CD8-positive, alpha-beta T cell (primary cell): ENCODE measurements at regions of chr1 and their contacts with region 1.

Region 1: DNA sequence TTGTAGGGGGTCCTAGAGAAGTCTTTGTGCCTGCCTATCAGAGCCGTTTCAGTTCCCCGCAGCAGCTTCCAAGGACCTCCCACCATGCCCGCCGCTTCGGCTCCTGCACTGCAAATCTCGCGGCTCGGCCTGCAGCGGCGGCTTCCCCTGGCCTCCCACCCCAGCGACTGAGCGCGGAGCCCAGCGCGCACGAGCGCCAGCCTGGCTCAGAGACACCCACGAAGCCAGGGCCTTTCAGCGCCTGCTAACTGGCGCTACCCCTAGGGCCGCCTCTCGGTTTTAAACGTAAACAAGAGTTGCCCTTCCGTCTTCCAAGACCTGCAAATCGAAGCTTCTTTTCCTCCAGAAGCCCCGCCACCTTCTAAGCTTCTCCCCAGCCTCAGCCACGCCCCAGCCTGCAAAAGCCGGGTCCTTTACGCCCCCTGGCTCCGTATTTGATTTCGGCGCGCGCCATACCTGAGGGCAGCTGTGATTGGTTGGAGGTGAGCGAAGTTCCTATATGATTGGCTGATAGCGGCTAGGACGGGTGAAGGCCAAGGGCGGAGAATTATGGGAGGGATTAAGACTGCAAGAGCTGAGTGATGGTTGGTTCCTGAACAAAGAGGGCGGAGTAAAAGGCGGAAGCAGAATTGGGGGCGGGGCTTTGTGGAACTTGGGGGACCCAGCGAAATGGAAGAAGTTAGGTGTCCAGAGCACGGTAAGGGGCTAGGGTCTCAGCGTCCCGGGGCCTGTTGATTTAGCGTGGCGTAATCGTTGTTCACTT is at the start of gene TTF2:
- DNase-seq: peak; percentile 88 to 99 (median 93)
- ATAC-seq: peak; percentile 87
- H3K4me3 ChIP-seq: peak within 1 kb of the TSS; percentile 75
- H3K4me3 Mint-ChIP-seq: no peak within 1 kb of the TSS
- H3K27ac ChIP-seq: peak within 1 kb of the TSS; percentile 70 to 92
- H3K27ac Mint-ChIP-seq: no peak within 1 kb of the TSS
- H3K4me1 ChIP-seq: peaks cover 22% of the 10 kb centered on the region
- H3K4me1 Mint-ChIP-seq: peaks cover 39% of the 10 kb centered on the region
- H3K27me3 ChIP-seq: no peaks in the 10 kb centered on the region
- H3K27me3 Mint-ChIP-seq: no peaks in the 10 kb centered on the region
- CTCF ChIP-seq: no peak
- total RNA-seq, gene TTF2: 31.5 to 33.2 TPM

Region 2: GRCh38 chr1:116504308-116505156 is 555.3 kb before region 1 on chr1:
- CTCF ChIA-PET with region 1: no interaction called
- POLR2A ChIA-PET with region 1: no interaction called
- intact Hi-C with region 1: loop called in 1 of 2 experiments (anchors 10 kb)
- DNase-seq: peak; percentile 71 to 97 (median 88)
- ATAC-seq: peak; percentile 93
- H3K4me3 ChIP-seq: no peak overlapping the region
- H3K4me3 Mint-ChIP-seq: peak overlapping the region; percentile 19
- H3K27ac ChIP-seq: peak overlapping the region; percentile 22 to 92
- H3K27ac Mint-ChIP-seq: peak overlapping the region; percentile 91
- H3K4me1 ChIP-seq: peaks cover 26% of the 10 kb centered on the region
- H3K4me1 Mint-ChIP-seq: peaks cover 42% of the 10 kb centered on the region
- H3K27me3 ChIP-seq: no peaks in the 10 kb centered on the region
- H3K27me3 Mint-ChIP-seq: no peaks in the 10 kb centered on the region
- CTCF ChIP-seq: no peak

Region 3: DNA sequence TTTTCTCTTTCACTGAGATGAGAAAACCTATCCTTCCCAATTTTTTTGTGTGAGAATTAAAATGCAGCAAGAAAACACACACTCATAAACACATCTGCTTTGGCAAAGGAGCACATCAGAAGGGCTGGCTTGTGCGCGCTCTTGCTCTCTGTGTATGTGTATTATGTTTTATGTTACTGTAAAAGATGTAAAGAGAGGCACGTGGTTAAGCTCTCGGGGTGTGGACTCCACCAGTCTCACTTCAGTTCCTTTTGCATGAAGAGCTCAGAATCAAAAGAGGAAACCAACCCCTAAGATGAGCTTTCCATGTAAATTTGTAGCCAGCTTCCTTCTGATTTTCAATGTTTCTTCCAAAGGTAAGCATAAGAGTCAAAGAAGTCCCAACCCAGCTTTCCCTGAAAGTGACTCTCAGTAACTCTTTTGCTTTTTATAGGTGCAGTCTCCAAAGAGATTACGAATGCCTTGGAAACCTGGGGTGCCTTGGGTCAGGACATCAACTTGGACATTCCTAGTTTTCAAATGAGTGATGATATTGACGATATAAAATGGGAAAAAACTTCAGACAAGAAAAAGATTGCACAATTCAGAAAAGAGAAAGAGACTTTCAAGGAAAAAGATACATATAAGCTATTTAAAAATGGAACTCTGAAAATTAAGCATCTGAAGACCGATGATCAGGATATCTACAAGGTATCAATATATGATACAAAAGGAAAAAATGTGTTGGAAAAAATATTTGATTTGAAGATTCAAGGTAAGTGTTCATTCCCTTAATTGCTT is 305.5 kb before region 1 on chr1 and contains the start of gene CD2:
- CTCF ChIA-PET with region 1: no interaction called
- POLR2A ChIA-PET with region 1: interaction called, 15 read pairs
- intact Hi-C with region 1: loop called in 1 of 2 experiments (anchors 1 kb)
- DNase-seq: peak in 6 of 9 experiments; percentile 43 to 80 (median 60)
- ATAC-seq: peak; percentile 83
- H3K4me3 ChIP-seq: peak within 1 kb of the TSS; percentile 71 to 84
- H3K4me3 Mint-ChIP-seq: peak within 1 kb of the TSS; percentile 93
- H3K27ac ChIP-seq: peak within 1 kb of the TSS; percentile 70 to 87
- H3K27ac Mint-ChIP-seq: peak within 1 kb of the TSS; percentile 99
- H3K4me1 ChIP-seq: peaks cover 23% of the 10 kb centered on the region
- H3K4me1 Mint-ChIP-seq: peaks cover 40% of the 10 kb centered on the region
- H3K27me3 ChIP-seq: no peaks in the 10 kb centered on the region
- H3K27me3 Mint-ChIP-seq: no peaks in the 10 kb centered on the region
- CTCF ChIP-seq: no peak
- total RNA-seq, gene CD2: 97.8 to 102 TPM

Region 4: GRCh38 chr1:116853670-116854402 is 206.0 kb before region 1 on chr1:
- CTCF ChIA-PET with region 1: interaction called, 14 read pairs
- POLR2A ChIA-PET with region 1: no interaction called
- intact Hi-C with region 1: loop called (anchors 1 kb)
- DNase-seq: no peak
- ATAC-seq: no peak
- H3K4me3 ChIP-seq: no peak overlapping the region
- H3K4me3 Mint-ChIP-seq: no peak overlapping the region
- H3K27ac ChIP-seq: no peak overlapping the region
- H3K27ac Mint-ChIP-seq: no peak overlapping the region
- H3K4me1 ChIP-seq: no peaks in the 10 kb centered on the region
- H3K4me1 Mint-ChIP-seq: peaks cover 8% of the 10 kb centered on the region
- H3K27me3 ChIP-seq: no peaks in the 10 kb centered on the region
- H3K27me3 Mint-ChIP-seq: no peaks in the 10 kb centered on the region
- CTCF ChIP-seq: no peak

Region 5: GRCh38 chr1:116951200-116951935 is 108.5 kb before region 1 on chr1:
- CTCF ChIA-PET with region 1: no interaction called
- POLR2A ChIA-PET with region 1: no interaction called
- intact Hi-C with region 1: no loop called
- DNase-seq: no peak
- ATAC-seq: no peak
- H3K4me3 ChIP-seq: no peak overlapping the region
- H3K4me3 Mint-ChIP-seq: no peak overlapping the region
- H3K27ac ChIP-seq: no peak overlapping the region
- H3K27ac Mint-ChIP-seq: no peak overlapping the region
- H3K4me1 ChIP-seq: no peaks in the 10 kb centered on the region
- H3K4me1 Mint-ChIP-seq: no peaks in the 10 kb centered on the region
- H3K27me3 ChIP-seq: no peaks in the 10 kb centered on the region
- H3K27me3 Mint-ChIP-seq: no peaks in the 10 kb centered on the region
- CTCF ChIP-seq: no peak

Region 6: GRCh38 chr1:117036018-117036461 is 23.8 kb before region 1 on chr1:
- CTCF ChIA-PET with region 1: no interaction called
- POLR2A ChIA-PET with region 1: no interaction called
- intact Hi-C with region 1: no loop called
- DNase-seq: no peak
- ATAC-seq: no peak
- H3K4me3 ChIP-seq: no peak overlapping the region
- H3K4me3 Mint-ChIP-seq: no peak overlapping the region
- H3K27ac ChIP-seq: no peak overlapping the region
- H3K27ac Mint-ChIP-seq: no peak overlapping the region
- H3K4me1 ChIP-seq: no peaks in the 10 kb centered on the region
- H3K4me1 Mint-ChIP-seq: peaks cover 12% of the 10 kb centered on the region
- H3K27me3 ChIP-seq: no peaks in the 10 kb centered on the region
- H3K27me3 Mint-ChIP-seq: no peaks in the 10 kb centered on the region
- CTCF ChIP-seq: no peak

Region 7: DNA sequence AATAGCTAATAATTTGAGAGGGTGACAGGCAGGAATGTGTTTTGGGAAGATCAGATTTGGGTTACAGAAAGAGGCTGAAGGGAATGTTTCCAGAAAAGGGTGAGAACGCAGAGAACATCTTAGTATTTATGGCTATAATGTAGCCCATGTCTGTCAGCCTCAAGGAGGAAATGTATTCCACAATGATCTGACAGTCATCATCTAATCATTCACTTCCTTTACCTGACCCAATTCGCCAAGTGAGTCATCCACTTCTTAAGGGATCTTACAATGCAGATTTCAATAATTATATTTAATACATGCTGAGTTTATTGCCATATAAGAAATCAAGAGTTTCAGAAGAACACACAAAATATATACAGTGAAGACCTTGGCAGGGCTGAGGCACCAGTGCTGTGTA is 50.9 kb after region 1 on chr1:
- CTCF ChIA-PET with region 1: no interaction called
- POLR2A ChIA-PET with region 1: no interaction called
- intact Hi-C with region 1: no loop called
- DNase-seq: no peak
- ATAC-seq: no peak
- H3K4me3 ChIP-seq: no peak overlapping the region
- H3K4me3 Mint-ChIP-seq: no peak overlapping the region
- H3K27ac ChIP-seq: no peak overlapping the region
- H3K27ac Mint-ChIP-seq: no peak overlapping the region
- H3K4me1 ChIP-seq: no peaks in the 10 kb centered on the region
- H3K4me1 Mint-ChIP-seq: no peaks in the 10 kb centered on the region
- H3K27me3 ChIP-seq: no peaks in the 10 kb centered on the region
- H3K27me3 Mint-ChIP-seq: peaks cover 2% of the 10 kb centered on the region
- CTCF ChIP-seq: no peak

Region 8: DNA sequence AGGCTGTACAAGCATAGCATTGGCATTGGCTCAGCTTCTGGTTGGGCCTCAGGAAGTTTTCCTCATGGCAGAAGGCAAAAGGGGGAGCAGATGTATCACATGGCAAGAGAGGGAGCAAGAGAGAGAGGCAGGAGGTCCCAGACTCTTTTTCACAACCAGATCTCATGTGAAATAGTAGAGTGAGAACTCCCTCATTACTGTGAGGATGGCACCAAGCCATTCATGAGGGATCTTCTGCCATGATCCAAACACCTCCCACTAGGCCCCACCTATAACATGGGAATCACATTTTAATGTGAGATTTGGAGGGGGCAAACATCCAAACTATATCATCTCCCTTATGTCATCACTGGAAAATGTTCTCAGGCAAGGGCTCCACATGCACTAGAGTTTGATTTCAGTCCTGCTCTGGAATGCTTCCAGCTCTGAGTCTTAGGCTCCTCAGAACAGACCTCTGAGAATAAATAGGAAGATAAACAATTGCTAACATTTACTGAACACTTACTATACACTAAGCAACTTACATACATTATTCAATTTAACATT is 190.3 kb after region 1 on chr1:
- CTCF ChIA-PET with region 1: no interaction called
- POLR2A ChIA-PET with region 1: no interaction called
- intact Hi-C with region 1: no loop called
- DNase-seq: no peak
- ATAC-seq: no peak
- H3K4me3 ChIP-seq: no peak overlapping the region
- H3K4me3 Mint-ChIP-seq: no peak overlapping the region
- H3K27ac ChIP-seq: no peak overlapping the region
- H3K27ac Mint-ChIP-seq: no peak overlapping the region
- H3K4me1 ChIP-seq: no peaks in the 10 kb centered on the region
- H3K4me1 Mint-ChIP-seq: no peaks in the 10 kb centered on the region
- H3K27me3 ChIP-seq: peaks cover 0 to 2% of the 10 kb centered on the region in 2 experiments
- H3K27me3 Mint-ChIP-seq: peaks cover 2% of the 10 kb centered on the region
- CTCF ChIP-seq: no peak

Region 9: GRCh38 chr1:117367047-117368018 is 307.5 kb after region 1 on chr1 and contains the start of gene MAN1A2:
- CTCF ChIA-PET with region 1: no interaction called
- POLR2A ChIA-PET with region 1: interaction called, 4 read pairs
- intact Hi-C with region 1: loop called (anchors 2 to 5 kb)
- DNase-seq: peak; percentile 31 to 87 (median 71)
- ATAC-seq: peak; percentile 61
- H3K4me3 ChIP-seq: peak within 1 kb of the TSS; percentile 57 to 84
- H3K4me3 Mint-ChIP-seq: peak within 1 kb of the TSS; percentile 95
- H3K27ac ChIP-seq: peak within 1 kb of the TSS; percentile 63 to 91
- H3K27ac Mint-ChIP-seq: peak within 1 kb of the TSS; percentile 97
- H3K4me1 ChIP-seq: peaks cover 52% of the 10 kb centered on the region
- H3K4me1 Mint-ChIP-seq: peaks cover 76% of the 10 kb centered on the region
- H3K27me3 ChIP-seq: no peaks in the 10 kb centered on the region
- H3K27me3 Mint-ChIP-seq: no peaks in the 10 kb centered on the region
- CTCF ChIP-seq: no peak
- total RNA-seq, gene MAN1A2: 46.5 to 49.3 TPM

Region 10: GRCh38 chr1:117929173-117929989 is 869.5 kb after region 1 on chr1 and contains the starts of genes GDAP2 and WDR3:
- CTCF ChIA-PET with region 1: no interaction called
- POLR2A ChIA-PET with region 1: no interaction called
- intact Hi-C with region 1: loop called (anchors 10 kb)
- DNase-seq: peak; percentile 90 to 98 (median 95)
- ATAC-seq: peak; percentile 90
- H3K4me3 ChIP-seq: peak within 1 kb of the TSS; percentile 83 to 89
- H3K4me3 Mint-ChIP-seq: peak within 1 kb of the TSS; percentile 94
- H3K27ac ChIP-seq: peak within 1 kb of the TSS; percentile 83 to 94
- H3K27ac Mint-ChIP-seq: peak within 1 kb of the TSS; percentile 97
- H3K4me1 ChIP-seq: peaks cover 37% of the 10 kb centered on the region
- H3K4me1 Mint-ChIP-seq: peaks cover 63% of the 10 kb centered on the region
- H3K27me3 ChIP-seq: no peaks in the 10 kb centered on the region
- H3K27me3 Mint-ChIP-seq: no peaks in the 10 kb centered on the region
- CTCF ChIP-seq: no peak
- total RNA-seq, gene GDAP2: 24.9 to 28.0 TPM
- total RNA-seq, gene WDR3: 5.7 to 6.1 TPM